ENCODE measurements at regions of chr17 and their contacts with region 1.

Region 1: DNA sequence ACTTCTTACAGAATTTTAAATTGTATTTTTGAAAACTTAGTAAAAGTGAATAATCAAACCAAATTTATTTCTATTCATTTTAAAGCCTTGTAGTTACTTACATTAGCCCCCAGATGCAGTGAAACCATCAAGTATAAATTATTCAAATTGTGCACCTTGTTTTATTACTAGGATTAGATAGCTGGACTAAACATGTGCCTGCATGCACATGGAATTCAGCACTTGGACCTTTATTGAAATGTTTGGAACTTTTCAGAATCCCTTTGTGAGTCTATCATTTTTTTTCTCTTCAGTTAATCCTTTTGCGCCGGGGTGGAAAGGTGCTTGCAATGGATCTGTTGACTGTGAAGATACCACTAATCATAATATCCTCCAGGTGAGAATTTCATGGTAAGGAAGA is 4.7 kb downstream of the ZPBP2 start:
- DNase-seq: no peak
- H3K4me3 ChIP-seq: no peak overlapping the region
- H3K27ac ChIP-seq: no peak overlapping the region
- H3K4me1 ChIP-seq: no peaks in the 10 kb centered on the region
- H3K27me3 ChIP-seq: no peaks in the 10 kb centered on the region
- CTCF ChIP-seq: no peak

Region 2: DNA sequence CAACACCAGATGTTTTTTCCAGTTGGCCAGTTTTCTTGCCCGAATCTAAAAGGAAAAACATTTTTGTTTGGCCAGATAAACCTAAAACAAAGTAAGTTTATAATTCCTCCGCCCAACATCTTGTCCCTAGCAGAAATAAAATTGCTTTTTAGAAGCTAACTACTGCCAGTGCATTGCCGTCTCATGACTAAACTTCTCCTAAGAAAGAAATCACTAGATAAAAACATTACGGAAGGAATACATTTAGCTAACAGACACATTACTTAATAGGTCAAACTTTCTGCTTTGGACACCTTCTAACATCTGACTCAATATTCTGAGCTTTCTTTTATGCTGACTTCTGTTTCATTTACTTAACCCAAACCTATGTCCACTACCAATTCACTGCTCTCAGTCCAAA is 507.5 kb before region 1 on chr17:
- CTCF ChIA-PET with region 1: no interaction called
- POLR2A ChIA-PET with region 1: interaction called, 11 read pairs
- intact Hi-C with region 1: no loop called
- DNase-seq: no peak
- H3K4me3 ChIP-seq: no peak overlapping the region
- H3K27ac ChIP-seq: no peak overlapping the region; the same call in 1 of the 2 replicates
- H3K4me1 ChIP-seq: no peaks in the 10 kb centered on the region
- H3K27me3 ChIP-seq: no peaks in the 10 kb centered on the region
- CTCF ChIP-seq: no peak